CD14-positive monocyte (primary cell): ENCODE measurements at regions of chr4 and their contacts with region 1.

Region 1: DNA sequence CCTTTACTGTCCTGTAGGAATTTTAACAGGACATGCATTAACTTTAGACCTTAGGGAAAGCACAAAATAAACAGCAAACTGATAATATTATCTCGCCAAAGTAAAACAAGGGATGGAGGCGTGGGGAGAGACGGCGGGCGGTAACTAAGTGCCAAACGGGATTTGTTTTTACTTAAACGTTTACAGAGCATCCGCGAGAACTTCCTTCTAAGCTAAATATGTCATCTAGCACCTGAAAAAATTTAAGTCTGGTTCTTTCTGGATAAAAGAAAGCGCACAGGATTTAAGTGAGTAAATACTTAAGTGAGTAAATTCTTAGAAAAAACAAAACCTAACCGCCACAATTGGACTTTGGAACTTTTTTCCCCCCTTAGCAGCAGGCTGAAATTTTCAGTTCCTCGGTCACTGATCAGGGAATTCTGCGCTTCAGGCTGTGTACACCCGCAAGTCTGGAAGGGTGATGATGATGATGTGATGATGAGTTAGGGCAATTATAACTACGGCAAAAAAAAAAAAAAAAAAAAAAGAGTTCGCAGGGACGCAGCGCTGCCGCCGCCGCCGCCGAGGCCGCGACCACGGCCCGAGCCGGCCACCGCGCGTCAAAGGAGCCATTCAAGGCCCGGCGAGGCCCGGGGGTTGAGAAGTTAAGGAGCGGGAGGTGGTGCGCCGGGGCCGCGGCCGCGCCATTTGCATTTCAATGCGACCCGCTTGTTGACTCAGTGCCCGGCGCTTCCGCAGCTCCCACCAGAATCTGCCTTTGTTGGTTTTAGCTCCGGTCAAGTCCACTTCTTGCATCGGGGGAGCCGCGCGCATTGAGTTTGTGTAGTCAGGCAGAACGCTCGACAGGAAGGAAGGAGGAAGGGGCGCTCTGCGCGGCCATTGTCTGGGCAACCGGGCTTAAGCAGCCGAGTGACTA is 108.8 kb downstream of the SPRY1 start:
- DNase-seq: peak; percentile 32 to 47 (median 37)
- H3K4me3 ChIP-seq: peak overlapping the region; percentile 30 to 74 (median 33)
- H3K4me3 Mint-ChIP-seq: peak overlapping the region; percentile 91 to 97
- H3K27ac ChIP-seq: no peak overlapping the region
- H3K27ac Mint-ChIP-seq: peak overlapping the region in 4 of 7 donors; percentile 66 to 90 (median 78)
- H3K4me1 ChIP-seq: peaks cover 9 to 14% of the 10 kb centered on the region in 2 donors
- H3K4me1 Mint-ChIP-seq: peaks cover 16% of the 10 kb centered on the region
- H3K27me3 ChIP-seq: peaks cover 3 to 17% of the 10 kb centered on the region in 2 donors
- H3K27me3 Mint-ChIP-seq: peaks cover 14 to 21% (median 20%) of the 10 kb centered on the region in 3 donors
- CTCF ChIP-seq: no peak

Region 2: GRCh38 chr4:123524958-123525628 is 19.7 kb after region 1 on chr4:
- intact Hi-C with region 1: no loop called
- DNase-seq: no peak
- H3K4me3 ChIP-seq: no peak overlapping the region
- H3K4me3 Mint-ChIP-seq: no peak overlapping the region
- H3K27ac ChIP-seq: no peak overlapping the region
- H3K27ac Mint-ChIP-seq: no peak overlapping the region
- H3K4me1 ChIP-seq: no peaks in the 10 kb centered on the region
- H3K4me1 Mint-ChIP-seq: no peaks in the 10 kb centered on the region
- H3K27me3 ChIP-seq: no peaks in the 10 kb centered on the region
- H3K27me3 Mint-ChIP-seq: peaks cover 0 to 2% (median 0%) of the 10 kb centered on the region in 3 donors
- CTCF ChIP-seq: no peak

Region 3: DNA sequence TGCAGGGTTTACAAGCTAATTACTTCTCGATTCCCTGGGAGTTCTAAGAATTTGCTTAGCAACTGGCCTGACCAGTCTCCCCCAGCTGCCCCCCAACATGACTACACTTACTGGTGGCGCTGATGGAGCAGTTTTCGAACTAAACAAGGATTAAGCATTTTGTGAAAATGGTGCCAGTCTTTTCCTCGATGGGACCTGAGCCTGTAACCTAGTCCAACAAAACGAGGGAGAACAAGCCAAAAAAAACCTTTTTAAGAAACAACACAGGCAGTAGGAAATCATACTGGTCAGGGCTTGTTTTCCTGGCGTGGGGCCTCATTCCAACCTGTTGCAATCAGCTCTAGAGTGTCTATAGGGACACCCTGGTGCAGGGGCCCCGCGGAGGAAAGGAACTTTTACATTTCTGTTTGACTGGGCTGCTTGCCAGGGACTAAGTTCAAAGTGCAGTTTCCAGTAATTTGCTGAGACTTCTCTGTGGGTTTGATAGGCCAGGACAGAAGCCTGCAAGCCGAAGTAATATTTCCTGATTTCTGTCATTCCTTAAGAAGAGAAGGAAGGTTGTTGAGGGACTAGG is 50.0 kb after region 1 on chr4:
- intact Hi-C with region 1: loop called in 1 of 2 experiments (anchors 10 kb)
- DNase-seq: no peak
- H3K4me3 ChIP-seq: no peak overlapping the region
- H3K4me3 Mint-ChIP-seq: peak overlapping the region in 1 of 2 donors; percentile 41
- H3K27ac ChIP-seq: no peak overlapping the region
- H3K27ac Mint-ChIP-seq: peak overlapping the region in 4 of 7 donors; percentile 18 to 74 (median 38)
- H3K4me1 ChIP-seq: peaks cover 25 to 27% of the 10 kb centered on the region in 2 donors
- H3K4me1 Mint-ChIP-seq: peaks cover 40% of the 10 kb centered on the region
- H3K27me3 ChIP-seq: no peaks in the 10 kb centered on the region
- H3K27me3 Mint-ChIP-seq: peaks cover 0 to 5% (median 2%) of the 10 kb centered on the region in 3 donors
- CTCF ChIP-seq: no peak